ENCODE measurements at regions of chr15 and their contacts with region 1.

Region 1: DNA sequence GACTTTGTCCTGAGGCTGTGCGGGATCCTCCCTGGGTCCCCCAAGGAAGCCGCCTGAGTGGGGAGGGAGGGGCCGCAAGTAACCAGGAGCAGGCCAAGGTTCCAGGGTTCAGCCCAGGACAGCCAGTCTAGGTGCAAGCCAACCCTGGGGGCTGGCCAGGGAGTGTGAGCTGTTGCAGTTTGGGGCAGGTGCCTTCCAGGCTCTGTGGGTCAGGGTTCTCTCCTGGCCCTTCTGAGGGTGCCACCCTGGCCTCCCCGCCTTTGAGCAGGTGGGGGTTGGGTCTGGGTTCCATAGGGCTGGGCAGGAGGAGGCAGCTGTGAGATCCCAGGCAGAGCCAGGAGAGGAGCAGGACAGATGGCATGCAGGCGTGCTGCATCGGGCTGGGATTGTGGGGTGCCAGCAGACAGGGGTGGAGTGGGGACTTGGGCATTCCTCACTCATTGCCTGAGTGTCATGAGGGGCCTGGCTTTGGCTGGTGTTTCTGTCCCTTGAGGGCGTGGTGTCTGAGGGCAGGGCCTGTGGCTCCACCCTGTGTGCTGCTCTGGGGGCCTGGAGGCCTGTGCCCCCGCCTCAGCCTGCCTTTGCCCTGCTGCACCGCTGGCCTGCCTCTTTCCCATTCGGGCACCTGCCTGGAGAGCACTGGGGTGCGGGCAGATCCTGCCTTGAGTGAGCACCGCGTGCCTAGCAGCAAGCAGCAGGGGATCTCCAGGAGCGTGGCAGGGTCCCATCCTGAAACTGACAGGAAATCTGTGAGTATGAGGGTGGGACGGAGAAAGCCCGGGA is 18.4 kb downstream of the KLF13 start:
- DNase-seq: peak; percentile 75
- ATAC-seq: peak; percentile 40
- H3K4me3 Mint-ChIP-seq: peak overlapping the region; percentile 90
- H3K27ac Mint-ChIP-seq: peak overlapping the region; percentile 99
- H3K4me1 Mint-ChIP-seq: peaks cover 84% of the 10 kb centered on the region
- H3K27me3 Mint-ChIP-seq: no peaks in the 10 kb centered on the region
- CTCF ChIP-seq: no peak

Region 2: DNA sequence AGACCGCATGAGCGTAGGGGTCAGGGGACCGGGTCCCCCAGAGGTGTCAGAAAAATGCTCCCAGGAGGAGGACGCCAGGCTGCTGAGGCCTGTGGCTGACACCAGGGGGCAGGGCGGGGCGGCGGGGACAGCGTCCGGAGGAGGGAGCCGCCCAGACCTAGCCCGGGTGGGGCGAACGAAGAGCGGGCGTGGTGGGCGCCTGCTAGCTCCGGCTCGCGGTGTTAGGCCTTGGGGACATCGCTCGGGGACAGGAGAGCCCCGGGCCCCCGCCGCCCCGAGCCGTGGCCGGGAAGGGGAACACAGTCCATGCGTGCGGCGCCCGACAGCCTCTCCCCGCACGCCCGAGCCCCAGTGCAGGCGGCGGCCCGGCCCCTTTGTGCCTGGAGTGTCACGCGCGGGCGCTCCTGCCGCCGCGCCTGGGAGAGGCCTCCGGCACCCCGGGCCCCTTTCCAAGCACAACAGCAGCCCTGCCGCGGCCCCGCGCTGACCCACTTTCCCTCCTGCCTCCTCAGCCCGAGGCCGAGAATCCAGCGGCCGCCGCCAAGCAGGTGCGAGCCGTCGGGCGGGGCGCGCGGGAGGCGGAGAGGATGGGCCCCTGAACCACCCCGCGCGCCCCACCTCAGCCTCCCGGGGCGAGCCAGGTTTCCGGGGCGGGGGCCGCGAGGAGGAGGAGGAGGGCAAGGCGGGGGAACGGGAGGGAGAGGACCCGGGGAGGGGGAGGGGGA is 129.4 kb before region 1 on chr15:
- CTCF ChIA-PET with region 1: interaction called, 8 read pairs
- POLR2A ChIA-PET with region 1: interaction called, 10 read pairs
- intact Hi-C with region 1: no loop called
- DNase-seq: peak; percentile 86
- ATAC-seq: peak; percentile 92
- H3K4me3 Mint-ChIP-seq: peak overlapping the region; percentile 73
- H3K27ac Mint-ChIP-seq: peak overlapping the region; percentile 73
- H3K4me1 Mint-ChIP-seq: peaks cover 18% of the 10 kb centered on the region
- H3K27me3 Mint-ChIP-seq: no peaks in the 10 kb centered on the region
- CTCF ChIP-seq: peak; percentile 86

Region 3: GRCh38 chr15:31235311-31236183 is 109.5 kb before region 1 on chr15:
- CTCF ChIA-PET with region 1: no interaction called
- POLR2A ChIA-PET with region 1: no interaction called
- intact Hi-C with region 1: no loop called
- DNase-seq: no peak
- ATAC-seq: no peak
- H3K4me3 Mint-ChIP-seq: no peak overlapping the region
- H3K27ac Mint-ChIP-seq: no peak overlapping the region
- H3K4me1 Mint-ChIP-seq: peaks cover 14% of the 10 kb centered on the region
- H3K27me3 Mint-ChIP-seq: no peaks in the 10 kb centered on the region
- CTCF ChIP-seq: no peak

Region 4: GRCh38 chr15:31311735-31312619 is 33.0 kb before region 1 on chr15:
- CTCF ChIA-PET with region 1: no interaction called
- POLR2A ChIA-PET with region 1: no interaction called
- intact Hi-C with region 1: no loop called
- DNase-seq: no peak
- ATAC-seq: no peak
- H3K4me3 Mint-ChIP-seq: no peak overlapping the region
- H3K27ac Mint-ChIP-seq: no peak overlapping the region
- H3K4me1 Mint-ChIP-seq: peaks cover 36% of the 10 kb centered on the region
- H3K27me3 Mint-ChIP-seq: no peaks in the 10 kb centered on the region
- CTCF ChIP-seq: no peak

Region 5: DNA sequence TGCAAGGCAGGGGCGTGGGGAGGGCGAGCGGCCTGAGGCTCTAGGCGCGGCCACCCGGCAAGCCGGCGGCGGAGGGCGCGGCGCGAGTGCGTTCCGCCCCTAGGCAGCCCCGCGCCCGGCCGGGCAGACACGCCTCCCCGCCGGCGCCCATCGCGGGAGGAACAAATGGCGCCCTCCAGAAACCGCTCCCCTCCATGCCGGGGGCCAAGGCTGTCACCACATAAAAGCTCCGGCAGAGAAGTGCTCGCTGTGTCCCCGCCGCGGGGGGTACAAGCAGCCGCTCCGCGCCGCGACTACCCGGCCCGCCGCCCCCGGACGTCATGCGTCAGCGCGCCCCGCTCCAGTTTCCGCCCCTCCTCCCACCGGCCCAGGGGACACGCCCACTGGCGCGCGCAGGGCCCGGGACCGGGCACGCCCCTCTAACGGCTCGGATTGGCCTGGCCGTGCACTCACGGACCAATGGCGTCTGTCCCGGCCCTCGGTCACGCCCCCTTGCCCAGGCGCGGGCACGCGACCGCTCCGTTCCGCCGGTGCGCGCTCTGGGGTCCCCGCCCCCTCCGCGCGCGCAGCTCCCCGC is 18.8 kb before region 1 on chr15:
- CTCF ChIA-PET with region 1: interaction called, 4 read pairs
- POLR2A ChIA-PET with region 1: interaction called, 28 read pairs
- intact Hi-C with region 1: loop called (anchors 1 kb)
- DNase-seq: peak; percentile 99
- ATAC-seq: peak; percentile 86
- H3K4me3 Mint-ChIP-seq: peak overlapping the region; percentile 86
- H3K27ac Mint-ChIP-seq: peak overlapping the region; percentile 75
- H3K4me1 Mint-ChIP-seq: peaks cover 60% of the 10 kb centered on the region
- H3K27me3 Mint-ChIP-seq: no peaks in the 10 kb centered on the region
- CTCF ChIP-seq: no peak

Region 6: GRCh38 chr15:31472636-31473384 is 127.8 kb after region 1 on chr15:
- CTCF ChIA-PET with region 1: interaction called, 3 read pairs
- POLR2A ChIA-PET with region 1: interaction called, 16 read pairs
- intact Hi-C with region 1: no loop called
- DNase-seq: peak; percentile 76
- ATAC-seq: peak; percentile 87
- H3K4me3 Mint-ChIP-seq: peak overlapping the region; percentile 65
- H3K27ac Mint-ChIP-seq: peak overlapping the region; percentile 90
- H3K4me1 Mint-ChIP-seq: peaks cover 63% of the 10 kb centered on the region
- H3K27me3 Mint-ChIP-seq: no peaks in the 10 kb centered on the region
- CTCF ChIP-seq: no peak

Region 7: GRCh38 chr15:31483053-31483985 is 138.3 kb after region 1 on chr15:
- CTCF ChIA-PET with region 1: interaction called, 18 read pairs
- POLR2A ChIA-PET with region 1: interaction called, 30 read pairs
- intact Hi-C with region 1: loop called (anchors 5 kb)
- DNase-seq: peak; percentile 85
- ATAC-seq: peak; percentile 80
- H3K4me3 Mint-ChIP-seq: peak overlapping the region; percentile 82
- H3K27ac Mint-ChIP-seq: peak overlapping the region; percentile 95
- H3K4me1 Mint-ChIP-seq: peaks cover 65% of the 10 kb centered on the region
- H3K27me3 Mint-ChIP-seq: no peaks in the 10 kb centered on the region
- CTCF ChIP-seq: no peak

Measured in activated CD8-positive, alpha-beta T cell treated with anti-CD3 and anti-CD28 coated beads for 36 hours (primary cell).